ENCODE measurements at regions of chr16 and their contacts with region 1.

Region 1: GRCh38 chr16:25419681-25420080 is 162.0 kb upstream of the ZKSCAN2 start:
- DNase-seq: no peak

Region 2: DNA sequence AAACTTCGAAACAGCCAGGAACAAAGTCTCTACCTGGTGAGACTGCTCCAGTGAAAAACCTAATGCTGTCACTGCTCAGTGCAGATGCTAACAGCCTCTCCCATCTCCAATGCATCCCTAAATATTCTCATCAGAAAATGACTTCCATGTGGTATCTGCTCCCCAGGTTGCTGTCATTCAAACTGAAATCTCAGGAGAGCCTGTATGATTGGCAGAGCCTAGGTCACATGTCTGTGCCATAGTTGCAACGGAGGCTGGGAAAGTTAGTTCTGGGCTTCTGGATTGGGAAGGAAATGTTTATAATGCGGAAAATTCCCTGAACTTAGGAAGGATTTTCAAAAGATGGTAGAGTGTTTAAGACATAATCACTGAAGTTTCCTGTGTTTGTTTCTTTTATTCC is 44.4 kb after region 1 on chr16:
- intact Hi-C with region 1: no loop called
- DNase-seq: no peak

Region 3: DNA sequence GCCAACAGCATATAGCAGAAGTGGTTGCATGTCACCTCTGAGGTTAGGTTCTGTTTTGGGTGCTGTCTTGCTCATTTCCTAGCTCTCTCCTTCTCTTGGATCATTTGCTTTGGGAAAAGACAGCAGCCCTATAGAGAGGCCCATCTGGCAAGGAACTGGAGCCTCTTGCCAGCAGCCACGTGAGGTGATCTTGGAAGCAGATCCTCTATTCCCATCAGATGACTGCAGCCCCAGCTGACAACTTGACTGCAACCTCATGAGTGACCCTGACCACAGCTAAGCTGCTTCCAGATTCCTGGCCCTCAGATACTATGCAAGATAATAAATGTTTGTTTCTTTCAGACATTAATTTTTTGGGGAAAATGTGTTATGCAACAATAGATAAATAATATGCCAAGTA is 58.8 kb after region 1 on chr16:
- intact Hi-C with region 1: loop called in 1 of 2 experiments (anchors 5 kb)
- DNase-seq: no peak

Measured in posterior vena cava (tissue), 2 donors.